ENCODE measurements at regions of chr11 and their contacts with region 1.

Region 1: DNA sequence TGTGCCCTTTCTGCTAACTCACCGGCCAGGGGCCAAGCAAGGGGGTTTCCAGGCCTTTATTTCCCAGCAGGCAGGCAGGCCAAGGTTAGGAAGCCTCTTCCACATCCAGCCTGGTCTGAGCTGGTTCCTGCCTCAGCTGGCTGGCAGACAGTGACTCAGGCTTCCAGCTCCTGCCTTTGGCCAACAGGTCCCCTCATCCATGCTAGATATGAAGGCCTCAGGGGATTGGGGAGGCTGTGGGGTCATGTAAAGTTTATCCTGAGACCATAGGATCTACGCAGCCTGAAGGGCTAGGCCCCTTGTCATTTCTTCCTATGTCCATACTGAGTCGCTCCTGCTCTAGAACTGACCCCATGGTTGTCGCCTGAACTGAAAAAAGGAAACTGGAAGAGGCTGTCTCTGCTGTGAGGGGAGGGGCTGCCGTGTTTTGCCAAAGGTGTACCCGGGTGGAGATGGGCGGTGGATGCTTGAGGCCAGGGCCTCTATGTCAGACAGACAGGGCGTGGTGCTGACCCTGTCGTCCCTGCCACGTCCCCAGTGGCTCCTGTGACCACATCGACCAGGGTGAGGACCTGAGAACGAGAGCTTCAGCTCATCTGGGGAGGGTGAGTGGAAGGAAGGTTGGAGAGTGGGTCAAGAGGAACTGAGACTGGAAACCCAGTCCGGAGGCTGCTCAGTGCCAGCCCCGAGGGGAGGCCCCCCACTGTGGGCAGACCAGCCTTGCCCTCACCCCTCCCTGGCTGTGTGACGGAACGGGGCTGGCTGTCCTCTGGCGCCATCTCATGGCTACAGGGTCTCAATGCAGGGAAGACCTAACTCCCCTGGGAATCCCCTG is 17.0 kb downstream of the P2RY6 start:
- DNase-seq: peak; percentile 70
- ATAC-seq: peak; percentile 95
- H3K4me3 ChIP-seq: 0 out of 2 replicates have a peak overlapping the region, but pooled peaks have one; percentile 9
- H3K27ac ChIP-seq: peak overlapping the region; percentile 49
- H3K4me1 ChIP-seq: peaks cover 23% of the 10 kb centered on the region
- H3K27me3 ChIP-seq: no peaks in the 10 kb centered on the region; a peak in 2 of 4 replicates
- CTCF ChIP-seq: peak; percentile 92 to 99 (median 97)
- EP300 ChIP-seq: 0 out of 4 replicates have a peak, but pooled peaks of 1 of the 2 experiments have one; percentile 6
- POLR2A ChIP-seq: no peak
- RAD21 ChIP-seq: peak; percentile 94

Region 2: DNA sequence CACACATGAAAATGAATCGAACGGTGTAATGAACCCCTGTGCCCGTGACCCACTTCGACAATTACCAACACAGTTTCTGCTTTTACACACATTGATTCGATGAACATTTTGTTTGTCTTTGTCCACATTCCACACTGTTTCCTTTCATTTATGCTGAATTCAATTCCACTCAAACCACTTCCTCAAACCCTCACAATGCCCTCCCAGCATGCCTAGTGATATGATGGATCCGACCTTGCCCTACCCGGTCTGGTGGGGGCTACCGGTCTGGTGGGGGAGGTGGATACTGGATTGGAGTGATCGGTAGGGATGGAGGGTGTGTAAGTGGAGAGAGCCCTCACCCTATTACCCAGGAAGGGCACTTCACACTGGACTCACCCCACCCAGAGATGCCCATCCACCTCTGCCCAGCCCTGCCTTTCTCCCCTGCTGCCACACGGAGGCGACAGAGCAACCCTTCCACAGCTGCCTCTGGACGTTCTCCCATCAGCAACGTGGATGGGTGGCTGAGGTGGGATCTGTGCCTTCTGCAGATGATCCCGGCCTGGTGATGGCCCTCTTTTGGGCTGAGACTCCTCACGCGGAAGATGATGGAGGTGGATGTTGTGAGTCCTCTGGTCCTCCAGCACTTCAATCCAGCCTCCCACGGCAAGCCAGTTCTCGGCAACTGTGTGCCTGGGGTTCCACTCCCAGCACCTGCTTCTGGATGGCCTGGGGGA is 104.0 kb before region 1 on chr11:
- CTCF ChIA-PET with region 1: interaction called, 116 read pairs
- POLR2A ChIA-PET with region 1: no interaction called
- RAD21 ChIA-PET with region 1: interaction called, 34 read pairs
- SMC1A ChIA-PET with region 1: interaction called, 40 read pairs
- in situ Hi-C with region 1: loop called (anchors 5 kb)
- intact Hi-C with region 1: loop called (anchors 1 kb)
- DNase-seq: no peak
- ATAC-seq: peak; percentile 86
- H3K4me3 ChIP-seq: no peak overlapping the region
- H3K27ac ChIP-seq: no peak overlapping the region
- H3K4me1 ChIP-seq: peaks cover 26% of the 10 kb centered on the region
- H3K27me3 ChIP-seq: no peaks in the 10 kb centered on the region
- CTCF ChIP-seq: peak; percentile 96 to 97 (median 97); a peak in 5 of 6 replicates
- EP300 ChIP-seq: no peak
- POLR2A ChIP-seq: no peak
- RAD21 ChIP-seq: peak; percentile 82

Region 3: DNA sequence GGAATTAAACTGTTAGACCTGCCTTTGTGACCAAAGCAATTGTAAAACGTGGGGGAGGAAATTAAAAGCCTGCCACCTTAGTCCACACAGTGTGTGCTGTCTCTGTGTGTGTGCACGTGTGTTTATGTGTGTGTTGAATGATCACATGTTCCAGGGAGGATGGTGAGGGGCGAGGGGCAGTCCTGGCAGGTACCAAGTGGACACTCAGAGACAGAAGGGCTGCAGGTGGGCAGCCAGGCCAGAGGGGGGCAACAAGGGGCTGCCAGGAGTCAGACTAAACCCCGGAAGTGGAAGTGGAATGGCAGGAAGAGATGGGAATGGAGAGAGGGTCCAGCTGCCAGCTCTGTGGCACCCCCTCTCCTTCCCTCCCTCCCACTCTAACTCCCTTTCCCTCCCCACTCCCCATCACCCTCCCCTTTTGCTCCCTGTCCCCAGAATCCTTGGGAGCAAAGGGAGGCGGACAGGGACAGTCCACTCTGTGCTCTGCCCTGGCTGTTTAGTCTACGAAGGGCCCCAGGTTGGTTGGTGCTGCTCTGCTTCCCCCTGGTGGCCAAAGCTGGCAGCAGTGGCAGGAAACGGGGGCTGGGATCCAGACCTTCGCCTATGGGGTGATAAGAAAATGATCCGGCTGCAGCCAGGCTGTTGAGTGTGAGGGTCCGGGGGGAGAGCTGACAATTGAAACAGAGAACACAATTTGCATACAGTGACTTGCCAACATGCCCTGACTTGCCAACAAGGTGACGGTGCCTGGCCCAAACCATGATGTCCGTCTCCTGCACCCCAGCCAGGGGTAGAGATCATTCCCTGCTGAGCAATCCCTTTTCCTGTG is 46.6 kb before region 1 on chr11:
- CTCF ChIA-PET with region 1: interaction called, 34 read pairs
- POLR2A ChIA-PET with region 1: interaction called, 3 read pairs
- RAD21 ChIA-PET with region 1: interaction called, 18 read pairs
- SMC1A ChIA-PET with region 1: interaction called, 4 read pairs
- in situ Hi-C with region 1: no loop called
- intact Hi-C with region 1: loop called (anchors 1 kb)
- DNase-seq: peak; percentile 48
- ATAC-seq: peak; percentile 97
- H3K4me3 ChIP-seq: no peak overlapping the region
- H3K27ac ChIP-seq: peak overlapping the region; percentile 46
- H3K4me1 ChIP-seq: peaks cover 18% of the 10 kb centered on the region
- H3K27me3 ChIP-seq: no peaks in the 10 kb centered on the region
- CTCF ChIP-seq: peak; percentile 73 to 90 (median 80)
- EP300 ChIP-seq: no peak
- POLR2A ChIP-seq: peak; percentile 53
- RAD21 ChIP-seq: peak; percentile 89

Region 4: GRCh38 chr11:73307323-73308002 is 18.4 kb after region 1 on chr11:
- CTCF ChIA-PET with region 1: interaction called, 103 read pairs
- POLR2A ChIA-PET with region 1: interaction called, 3 read pairs
- RAD21 ChIA-PET with region 1: interaction called, 7 read pairs
- SMC1A ChIA-PET with region 1: interaction called, 8 read pairs
- in situ Hi-C with region 1: no loop called
- intact Hi-C with region 1: no loop called
- DNase-seq: peak; percentile 75
- ATAC-seq: peak; percentile 85
- H3K4me3 ChIP-seq: peak overlapping the region; percentile 76
- H3K27ac ChIP-seq: peak overlapping the region; percentile 69
- H3K4me1 ChIP-seq: peaks cover 7% of the 10 kb centered on the region; the same call in 1 of the 2 replicates
- H3K27me3 ChIP-seq: no peaks in the 10 kb centered on the region
- CTCF ChIP-seq: peak; percentile 81 to 95 (median 83)
- EP300 ChIP-seq: no peak
- POLR2A ChIP-seq: peak; percentile 77
- RAD21 ChIP-seq: peak; percentile 94

Region 5: GRCh38 chr11:73325036-73325981 is 36.2 kb after region 1 on chr11:
- CTCF ChIA-PET with region 1: interaction called, 19 read pairs
- POLR2A ChIA-PET with region 1: no interaction called
- RAD21 ChIA-PET with region 1: interaction called, 10 read pairs
- SMC1A ChIA-PET with region 1: interaction called, 5 read pairs
- in situ Hi-C with region 1: no loop called
- intact Hi-C with region 1: no loop called
- DNase-seq: peak; percentile 83
- ATAC-seq: peak; percentile 83
- H3K4me3 ChIP-seq: peak overlapping the region; percentile 38; the same call in 1 of the 2 replicates
- H3K27ac ChIP-seq: peak overlapping the region; percentile 99
- H3K4me1 ChIP-seq: peaks cover 80% of the 10 kb centered on the region
- H3K27me3 ChIP-seq: no peaks in the 10 kb centered on the region
- CTCF ChIP-seq: no peak
- EP300 ChIP-seq: no peak; a peak in 2 of 4 replicates
- POLR2A ChIP-seq: peak; percentile 70
- RAD21 ChIP-seq: no peak

Region 6: GRCh38 chr11:73463359-73463758 is 174.3 kb after region 1 on chr11:
- CTCF ChIA-PET with region 1: no interaction called
- POLR2A ChIA-PET with region 1: no interaction called
- RAD21 ChIA-PET with region 1: no interaction called
- SMC1A ChIA-PET with region 1: no interaction called
- in situ Hi-C with region 1: no loop called
- intact Hi-C with region 1: no loop called
- DNase-seq: no peak
- ATAC-seq: no peak
- H3K4me3 ChIP-seq: no peak overlapping the region
- H3K27ac ChIP-seq: no peak overlapping the region
- H3K4me1 ChIP-seq: no peaks in the 10 kb centered on the region
- H3K27me3 ChIP-seq: no peaks in the 10 kb centered on the region
- CTCF ChIP-seq: no peak
- EP300 ChIP-seq: no peak
- POLR2A ChIP-seq: no peak
- RAD21 ChIP-seq: no peak

Measured in GM12878 (cell line).